ENCODE measurements at regions of chr20 and their contacts with region 1.

Region 1: GRCh38 chr20:35741892-35742740 is at the start of gene RBM39:
- DNase-seq: peak; percentile 100
- H3K4me3 ChIP-seq: peak within 1 kb of the TSS; percentile 66 to 96 (median 92)
- H3K27ac ChIP-seq: peak within 1 kb of the TSS; percentile 100
- H3K4me1 ChIP-seq: peaks cover 24 to 26% of the 10 kb centered on the region in 2 donors
- H3K27me3 ChIP-seq: no peaks in the 10 kb centered on the region
- CTCF ChIP-seq: peak in 4 of 6 experiments; percentile 6 to 45 (median 41)
- POLR2A ChIP-seq: peak; percentile 96 to 99
- total RNA-seq, gene RBM39: 315 to 475 (median 368) TPM

Region 2: GRCh38 chr20:35954200-35954906 is 212.2 kb after region 1 on chr20 and contains the start of gene SCAND1:
- intact Hi-C with region 1: loop called (anchors 5 kb)
- DNase-seq: peak; percentile 97 to 98
- H3K4me3 ChIP-seq: peak within 1 kb of the TSS; percentile 62 to 91 (median 74)
- H3K27ac ChIP-seq: peak within 1 kb of the TSS; percentile 92 to 96 (median 95)
- H3K4me1 ChIP-seq: peaks cover 15 to 18% of the 10 kb centered on the region in 2 donors
- H3K27me3 ChIP-seq: no peaks in the 10 kb centered on the region
- CTCF ChIP-seq: peak; percentile 78 to 98 (median 92)
- POLR2A ChIP-seq: peak in 1 of 2 donors; percentile 89
- total RNA-seq, gene SCAND1: 88.4 to 182 (median 125) TPM

Measured in thyroid gland (tissue), 4 donors.